ENCODE measurements at regions of chr2 and their contacts with region 1.

Region 1: GRCh38 chr2:79041032-79041448 is 15.5 kb downstream of the REG3G start:
- DNase-seq: no peak
- CTCF ChIP-seq: peak; percentile 36

Region 2: GRCh38 chr2:78913257-78913656 is 127.8 kb before region 1 on chr2:
- in situ Hi-C with region 1: no loop called
- DNase-seq: no peak
- CTCF ChIP-seq: no peak

Region 3: GRCh38 chr2:78940998-78941397 is 100.0 kb before region 1 on chr2:
- in situ Hi-C with region 1: loop called (anchors 25 kb)
- DNase-seq: no peak
- CTCF ChIP-seq: no peak

Region 4: DNA sequence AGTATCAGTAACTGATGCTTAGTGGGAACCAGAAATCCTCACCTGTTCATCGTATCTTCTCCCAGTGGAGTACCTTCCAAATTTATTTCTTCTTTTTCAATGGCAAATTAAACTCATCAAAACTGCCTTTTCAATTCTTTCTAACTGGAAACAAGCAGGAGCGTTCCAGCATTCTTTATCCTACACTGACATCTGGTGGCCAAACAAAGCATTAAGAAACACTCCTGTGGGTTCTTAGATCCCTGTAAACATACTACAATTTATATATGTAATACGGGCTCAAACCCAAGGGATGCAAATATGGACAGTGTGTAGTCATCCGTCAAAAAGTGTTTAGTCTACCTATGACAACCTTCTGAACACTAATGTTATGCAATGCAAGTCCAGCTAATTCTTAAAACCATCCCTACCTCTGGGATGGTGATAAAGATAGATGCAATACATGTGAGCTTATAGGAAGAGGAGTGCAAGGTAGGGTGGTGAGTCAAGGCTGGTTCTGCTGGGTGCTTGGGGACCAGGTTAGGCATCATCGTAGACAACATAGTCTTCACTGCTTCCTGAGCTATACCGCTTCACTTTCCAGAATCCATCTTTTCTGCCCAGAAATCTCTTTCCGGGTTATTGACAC is 846.8 kb after region 1 on chr2:
- in situ Hi-C with region 1: loop called (anchors 25 kb)
- DNase-seq: peak; percentile 46
- CTCF ChIP-seq: peak; percentile 71